ENCODE measurements at regions of chr15 and their contacts with region 1.

Region 1: DNA sequence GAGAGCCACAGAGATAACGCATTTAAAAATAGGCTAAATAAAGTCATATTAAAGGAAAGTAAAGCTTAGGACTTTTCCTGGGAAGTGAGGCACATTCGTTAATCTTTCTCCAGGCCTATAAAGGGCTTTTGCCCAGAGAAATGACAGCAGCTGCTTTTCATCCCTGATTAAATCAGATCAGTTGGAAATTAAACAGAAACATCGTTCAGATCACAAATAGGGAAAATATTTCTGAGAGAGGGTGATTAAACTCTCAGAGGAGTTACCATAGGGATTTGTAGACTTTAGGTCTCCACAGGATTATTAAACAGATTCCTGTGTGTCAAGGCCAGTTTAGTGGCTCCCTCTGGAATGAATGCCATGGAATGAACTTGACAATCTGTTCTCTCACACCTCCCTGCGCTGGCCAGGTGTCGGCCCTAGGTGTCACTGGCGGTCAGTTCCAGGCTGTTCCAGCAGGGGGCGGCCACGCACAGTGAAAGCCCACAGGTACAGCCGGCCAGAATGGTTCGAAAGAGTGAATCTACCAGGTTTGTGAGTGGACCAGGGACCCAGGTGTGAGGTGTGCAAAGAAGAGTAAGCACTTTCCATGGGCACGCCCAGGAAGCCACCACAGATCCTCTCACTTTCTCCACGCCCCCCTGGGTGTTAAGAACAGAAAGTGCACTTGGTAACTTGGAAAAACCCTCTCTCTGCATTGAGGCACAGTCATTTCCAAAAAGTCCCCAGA is 253.0 kb upstream of the RASGRP1 start:
- DNase-seq: peak; percentile 82 to 85 (median 85)
- ATAC-seq: peak; percentile 99 to 100 (median 100)
- H3K4me3 ChIP-seq: no peak overlapping the region
- H3K27ac ChIP-seq: no peak overlapping the region
- H3K4me1 ChIP-seq: no peaks in the 10 kb centered on the region
- H3K27me3 ChIP-seq: no peaks in the 10 kb centered on the region
- CTCF ChIP-seq: peak; percentile 98 to 99 (median 99)
- POLR2A ChIP-seq: no peak

Region 2: GRCh38 chr15:38991126-38991525 is 173.5 kb after region 1 on chr15:
- intact Hi-C with region 1: loop called (anchors 10 kb)
- DNase-seq: no peak
- ATAC-seq: peak; percentile 50 to 83 (median 78)
- H3K4me3 ChIP-seq: no peak overlapping the region
- H3K27ac ChIP-seq: no peak overlapping the region
- H3K4me1 ChIP-seq: no peaks in the 10 kb centered on the region
- H3K27me3 ChIP-seq: no peaks in the 10 kb centered on the region
- CTCF ChIP-seq: peak; percentile 41 to 59 (median 56)
- POLR2A ChIP-seq: no peak